A549 (cell line): ENCODE measurements at regions of chr7 and their contacts with region 1.

Region 1: DNA sequence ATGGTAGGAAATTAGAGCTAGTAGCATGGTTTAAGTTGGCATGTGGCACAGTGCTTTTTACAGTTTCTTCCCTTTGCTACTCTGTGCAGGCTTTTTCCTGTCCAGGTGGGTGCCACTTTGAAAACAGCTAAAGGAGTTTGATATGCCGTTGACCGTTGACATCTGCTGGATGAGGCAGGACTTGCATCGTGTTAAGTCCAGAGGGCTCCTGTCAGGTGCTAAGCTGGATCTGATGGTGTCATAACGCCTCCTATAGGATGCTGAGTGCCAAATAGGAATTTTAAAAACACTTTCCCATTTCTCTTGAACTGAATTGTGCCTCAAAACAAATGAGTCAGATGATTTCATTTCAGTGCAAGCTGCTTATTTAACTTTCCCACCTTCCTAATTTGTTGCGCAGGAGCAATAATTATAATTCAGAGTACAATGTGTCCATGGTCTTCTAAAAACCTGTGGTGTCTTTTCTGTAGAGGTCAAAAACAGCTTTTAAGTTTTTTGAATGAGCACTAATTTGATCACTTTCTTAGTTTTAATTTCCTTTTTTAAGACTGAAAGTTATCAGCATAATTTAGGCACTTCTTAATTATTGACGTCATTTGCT is 178.3 kb downstream of the CDCA7L start:
- DNase-seq: peak; percentile 72 to 90
- ATAC-seq: peak; percentile 99
- H3K4me3 ChIP-seq: no peak overlapping the region
- H3K27ac ChIP-seq: no peak overlapping the region
- H3K4me1 ChIP-seq: no peaks in the 10 kb centered on the region
- CTCF ChIP-seq: peak; percentile 95
- EP300 ChIP-seq: no peak
- POLR2A ChIP-seq: no peak
- RAD21 ChIP-seq: peak; percentile 95 to 96

Region 2: DNA sequence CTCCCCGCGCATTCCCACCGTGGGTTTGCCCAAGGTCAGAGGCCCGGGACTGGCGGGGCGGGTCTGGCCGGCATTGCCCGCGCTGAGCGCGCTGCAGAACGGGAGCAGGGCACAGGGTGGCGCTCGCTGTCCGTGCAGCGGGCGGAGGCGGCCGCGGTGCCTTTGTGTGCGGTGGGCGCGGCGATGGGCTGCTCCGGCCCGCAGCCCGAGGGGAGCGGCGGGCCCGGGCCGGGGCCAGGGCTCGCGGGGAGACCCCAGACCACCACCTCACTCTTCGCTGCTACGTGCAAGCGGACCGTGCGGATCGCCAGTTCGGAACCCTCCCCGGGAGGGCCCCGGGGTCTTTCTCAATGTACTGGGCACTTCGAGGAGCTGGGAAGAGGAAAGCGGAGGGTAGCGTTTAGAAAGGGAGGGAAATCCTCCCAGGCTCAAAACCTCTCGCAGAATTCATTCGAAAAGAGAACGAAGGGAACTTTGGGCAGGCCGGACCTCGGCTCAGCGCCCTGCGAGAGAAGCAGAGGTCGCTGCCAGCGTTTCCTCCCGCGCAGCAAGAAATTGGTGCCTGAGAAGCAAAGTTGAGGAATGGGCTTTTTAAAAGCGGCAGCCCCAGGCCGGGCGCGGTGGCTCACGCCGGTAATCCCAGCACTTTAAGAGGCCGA is 989.2 kb before region 1 on chr7:
- CTCF ChIA-PET with region 1: interaction called, 39 read pairs
- POLR2A ChIA-PET with region 1: no interaction called
- DNase-seq: peak; percentile 36 to 37
- ATAC-seq: peak; percentile 99 to 100
- H3K4me3 ChIP-seq: peak overlapping the region; percentile 61
- H3K27ac ChIP-seq: peak overlapping the region; percentile 37 to 40; a peak in 3 of 6 replicates
- H3K4me1 ChIP-seq: peaks cover 6% of the 10 kb centered on the region; the same call in 1 of the 3 replicates
- CTCF ChIP-seq: peak; percentile 83
- EP300 ChIP-seq: no peak
- POLR2A ChIP-seq: no peak
- RAD21 ChIP-seq: peak; percentile 68 to 94

Region 3: DNA sequence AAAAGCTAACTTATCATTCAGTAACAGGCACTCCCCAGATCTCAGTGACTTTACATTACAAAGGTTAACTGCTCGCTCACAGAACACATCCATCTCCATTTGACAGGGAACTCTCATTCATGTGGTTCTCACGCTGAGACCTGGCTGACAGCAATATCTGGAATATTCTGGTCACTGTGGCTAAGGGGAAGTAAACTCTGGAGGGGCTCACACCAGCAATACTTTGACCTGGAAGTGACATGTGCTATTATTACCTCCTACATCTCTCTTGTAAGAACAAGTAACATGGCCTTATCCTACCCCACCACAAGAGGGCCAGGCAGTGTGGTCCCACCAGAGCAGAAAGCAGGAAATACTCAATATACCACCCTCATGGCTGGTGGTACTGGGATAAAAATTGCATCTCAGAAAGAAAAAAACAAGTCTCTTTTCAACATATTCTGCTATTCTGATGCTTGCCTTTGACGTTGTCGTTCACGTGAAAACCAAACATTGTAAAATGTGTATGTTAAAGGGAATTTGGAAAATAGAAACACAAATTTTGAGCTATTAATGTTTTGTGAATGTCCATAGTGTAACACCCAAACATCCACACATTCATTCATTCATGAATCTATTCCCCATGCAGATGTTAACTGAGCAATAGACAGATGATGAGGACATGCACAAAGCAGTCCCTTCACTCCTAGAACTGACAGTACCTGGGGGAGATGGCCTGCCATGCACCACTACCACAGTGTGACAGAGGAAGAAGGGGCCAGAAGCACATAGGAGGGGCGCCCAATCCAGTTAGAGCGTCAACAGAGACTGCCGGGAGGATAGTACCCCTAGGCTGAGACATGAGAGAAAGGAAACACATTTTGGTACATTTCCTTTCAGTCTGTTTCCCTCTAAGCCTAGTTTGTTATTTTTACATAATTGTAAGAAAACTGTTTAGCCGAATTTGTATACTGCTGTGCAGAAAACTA is 505.5 kb before region 1 on chr7:
- CTCF ChIA-PET with region 1: interaction called, 227 read pairs
- POLR2A ChIA-PET with region 1: no interaction called
- DNase-seq: peak; percentile 16 to 48
- ATAC-seq: peak; percentile 85 to 90
- H3K4me3 ChIP-seq: no peak overlapping the region
- H3K27ac ChIP-seq: no peak overlapping the region
- H3K4me1 ChIP-seq: no peaks in the 10 kb centered on the region
- CTCF ChIP-seq: peak; percentile 34
- EP300 ChIP-seq: no peak
- POLR2A ChIP-seq: no peak
- RAD21 ChIP-seq: peak; percentile 28 to 55; a peak in 3 of 5 replicates

Region 4: GRCh38 chr7:21568762-21569161 is 198.6 kb before region 1 on chr7:
- CTCF ChIA-PET with region 1: interaction called, 19 read pairs
- POLR2A ChIA-PET with region 1: no interaction called
- DNase-seq: peak in 1 of 2 experiments; percentile 7
- ATAC-seq: peak; percentile 68 to 74; a peak in 4 of 6 replicates
- H3K4me3 ChIP-seq: no peak overlapping the region
- H3K27ac ChIP-seq: no peak overlapping the region
- H3K4me1 ChIP-seq: no peaks in the 10 kb centered on the region
- CTCF ChIP-seq: peak; percentile 24; the same call in 2 of the 3 replicates
- EP300 ChIP-seq: no peak
- POLR2A ChIP-seq: no peak
- RAD21 ChIP-seq: peak; percentile 34 to 43; a peak in 3 of 5 replicates

Region 5: DNA sequence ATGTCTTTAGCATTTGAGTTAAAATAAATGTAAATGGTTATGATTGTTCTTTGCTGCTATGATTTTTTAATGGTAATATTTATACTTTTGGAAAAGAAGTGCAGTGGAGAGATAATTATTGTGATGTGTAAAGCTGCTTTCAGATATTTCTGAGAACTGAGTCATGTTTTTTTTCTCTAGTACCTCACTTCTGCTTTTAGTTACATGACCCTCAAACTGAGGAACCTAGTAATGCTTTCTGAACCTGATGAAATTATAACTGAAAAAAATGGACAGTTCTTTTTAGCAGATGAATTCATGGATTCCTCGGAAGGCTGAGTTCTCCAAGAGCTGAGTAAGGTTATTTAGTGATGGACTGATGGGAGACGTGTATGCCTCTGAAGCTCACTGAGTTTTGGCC is 10.5 kb after region 1 on chr7:
- CTCF ChIA-PET with region 1: interaction called, 19 read pairs
- POLR2A ChIA-PET with region 1: no interaction called
- DNase-seq: no peak
- ATAC-seq: no peak
- H3K4me3 ChIP-seq: no peak overlapping the region
- H3K27ac ChIP-seq: no peak overlapping the region
- H3K4me1 ChIP-seq: no peaks in the 10 kb centered on the region
- CTCF ChIP-seq: no peak
- EP300 ChIP-seq: no peak
- POLR2A ChIP-seq: no peak
- RAD21 ChIP-seq: no peak